Activated CD4-positive, alpha-beta memory T cell treated with anti-CD3 and anti-CD28 coated beads, Interleukin-2, amount 10 ng/mL, durations not matched to agents 7 days and 5 days (primary cell): ENCODE measurements at regions of chr17 and their contacts with region 1.

Region 1: DNA sequence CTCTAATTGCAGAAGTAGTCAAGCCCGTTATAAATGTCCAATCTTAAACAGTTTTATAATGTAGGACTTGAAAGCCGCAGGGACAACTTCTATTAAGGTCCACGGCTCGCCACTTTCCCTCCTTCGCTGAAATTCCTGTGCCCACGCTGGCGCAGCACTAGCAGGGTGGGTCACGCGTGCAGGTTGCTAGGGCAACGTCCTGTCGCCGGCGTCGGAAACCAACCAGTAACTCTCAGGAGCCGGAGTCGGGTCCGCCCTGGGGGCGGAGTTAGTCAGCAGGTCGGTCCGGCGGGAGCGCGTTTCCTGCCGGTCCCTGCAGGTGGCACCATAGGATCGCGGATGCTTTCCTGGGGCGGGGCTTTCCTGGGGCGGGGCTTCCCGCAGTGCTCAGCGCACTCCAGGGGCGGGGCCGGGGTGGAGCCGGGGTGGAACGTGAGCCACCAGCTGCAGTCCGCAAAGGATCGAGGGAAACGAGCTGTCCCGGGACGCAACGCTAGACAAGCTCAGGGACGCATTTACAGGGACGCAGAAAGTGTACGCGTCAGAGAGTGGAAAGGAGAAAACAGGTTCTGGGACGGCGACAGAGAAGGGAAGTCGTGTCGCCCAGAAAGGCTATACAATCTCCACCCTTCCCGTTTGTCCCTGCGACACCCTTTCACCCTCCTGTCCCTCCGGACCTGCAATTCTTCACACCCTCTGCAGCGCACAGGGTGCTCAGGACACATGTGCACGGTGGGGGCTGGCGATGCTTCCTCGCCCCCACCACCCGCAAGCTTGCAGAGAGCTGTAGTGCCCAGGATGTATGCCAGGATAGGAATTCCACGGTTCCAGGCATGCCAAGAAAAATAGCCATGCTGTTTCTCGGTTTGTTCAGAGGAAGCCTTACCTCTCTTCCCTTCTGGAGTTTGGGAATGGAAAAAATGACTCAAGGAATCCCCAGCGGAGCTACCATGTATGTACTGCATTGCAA is 12.4 kb downstream of the COPZ2 start:
- DNase-seq: peak; percentile 98
- H3K4me3 Mint-ChIP-seq: peak overlapping the region; percentile 86
- H3K27ac Mint-ChIP-seq: peak overlapping the region; percentile 91
- H3K4me1 Mint-ChIP-seq: peaks cover 38% of the 10 kb centered on the region
- H3K27me3 Mint-ChIP-seq: peaks cover 20% of the 10 kb centered on the region

Region 2: GRCh38 chr17:47949136-47949759 is 76.0 kb before region 1 on chr17:
- CTCF ChIA-PET with region 1: interaction called, 10 read pairs
- POLR2A ChIA-PET with region 1: no interaction called
- DNase-seq: peak; percentile 84
- H3K4me3 Mint-ChIP-seq: peak overlapping the region; percentile 43
- H3K27ac Mint-ChIP-seq: peak overlapping the region; percentile 68
- H3K4me1 Mint-ChIP-seq: peaks cover 41% of the 10 kb centered on the region
- H3K27me3 Mint-ChIP-seq: no peaks in the 10 kb centered on the region

Region 3: DNA sequence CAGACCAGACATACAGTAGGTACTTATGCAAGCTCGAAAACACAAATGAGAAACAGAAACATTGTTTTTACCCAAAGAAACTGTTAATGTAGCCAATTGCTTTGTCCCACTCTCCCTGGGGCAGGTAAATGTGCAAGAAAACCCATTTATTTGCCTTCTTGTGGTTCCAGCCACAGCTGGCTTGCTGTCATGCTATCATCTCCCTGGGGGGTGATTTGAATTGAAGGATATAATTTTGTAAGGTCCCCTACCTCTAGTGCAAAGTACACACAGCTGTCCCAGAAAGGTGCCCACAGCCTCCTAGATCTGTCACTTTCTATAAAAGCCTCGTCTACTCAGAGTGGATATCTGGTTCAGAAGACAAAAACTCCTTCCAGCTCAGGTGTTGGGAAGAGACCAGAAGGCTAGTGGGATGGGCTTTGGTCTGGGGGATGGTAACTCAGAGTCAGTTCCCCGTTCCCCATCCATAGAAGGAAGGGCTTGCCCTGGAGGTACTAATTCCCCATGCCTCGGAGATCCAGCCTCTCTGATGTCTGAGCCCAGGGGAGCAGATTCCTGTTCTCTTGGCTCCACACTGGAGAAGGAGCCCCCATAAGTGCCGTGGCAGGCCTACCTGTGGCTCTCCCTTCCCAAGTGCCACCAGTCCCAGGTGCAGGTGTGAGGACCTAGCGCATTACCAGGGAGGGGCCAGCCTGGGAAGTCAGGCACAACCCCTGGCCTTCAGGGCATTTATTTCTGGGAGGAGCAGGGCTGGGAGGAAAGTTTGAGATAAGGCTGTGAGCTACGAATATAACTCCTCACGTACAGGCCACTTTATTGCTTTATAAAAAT is 65.2 kb before region 1 on chr17:
- CTCF ChIA-PET with region 1: no interaction called
- POLR2A ChIA-PET with region 1: no interaction called
- DNase-seq: no peak
- H3K4me3 Mint-ChIP-seq: no peak overlapping the region
- H3K27ac Mint-ChIP-seq: no peak overlapping the region
- H3K4me1 Mint-ChIP-seq: no peaks in the 10 kb centered on the region
- H3K27me3 Mint-ChIP-seq: peaks cover 2% of the 10 kb centered on the region

Region 4: GRCh38 chr17:48011405-48012150 is 13.6 kb before region 1 on chr17:
- CTCF ChIA-PET with region 1: interaction called, 27 read pairs
- POLR2A ChIA-PET with region 1: no interaction called
- DNase-seq: peak; percentile 68
- H3K4me3 Mint-ChIP-seq: peak overlapping the region; percentile 73
- H3K27ac Mint-ChIP-seq: no peak overlapping the region
- H3K4me1 Mint-ChIP-seq: peaks cover 23% of the 10 kb centered on the region
- H3K27me3 Mint-ChIP-seq: peaks cover 49% of the 10 kb centered on the region

Region 5: DNA sequence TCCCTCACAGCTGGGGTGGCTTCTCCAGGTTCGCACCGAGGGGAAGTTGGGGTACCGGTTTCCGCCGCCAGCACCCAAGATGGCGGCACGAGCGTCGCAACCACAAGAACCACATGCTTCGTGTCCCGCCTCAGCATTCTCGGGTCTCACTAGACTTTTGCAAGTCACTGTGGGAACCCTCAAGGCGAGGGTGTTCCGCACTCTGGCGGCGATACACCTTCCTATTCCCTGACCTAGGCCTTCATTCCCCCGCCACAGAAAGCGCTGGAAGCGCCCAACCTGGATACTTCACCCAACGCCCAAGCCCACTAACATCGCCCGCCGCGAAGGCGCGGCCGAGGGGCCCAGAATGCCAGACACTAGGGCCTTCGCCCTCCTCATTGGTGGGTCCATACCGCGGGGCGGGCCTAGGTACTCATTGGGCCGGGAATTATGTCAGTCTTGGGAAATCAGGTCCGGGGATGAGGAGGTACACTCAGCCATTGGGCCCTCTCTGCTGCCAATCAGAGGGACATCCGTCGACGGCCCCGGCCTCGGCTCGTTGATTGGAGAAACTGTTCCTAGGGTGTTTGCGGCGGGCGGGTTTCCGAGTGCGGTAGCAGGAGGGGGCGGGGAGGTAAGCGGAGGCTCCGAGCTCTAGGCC is 22.6 kb after region 1 on chr17 and contains the start of gene NFE2L1:
- CTCF ChIA-PET with region 1: interaction called, 62 read pairs
- POLR2A ChIA-PET with region 1: interaction called, 45 read pairs
- DNase-seq: peak; percentile 99
- H3K4me3 Mint-ChIP-seq: peak within 1 kb of the TSS; percentile 99
- H3K27ac Mint-ChIP-seq: peak within 1 kb of the TSS; percentile 97
- H3K4me1 Mint-ChIP-seq: peaks cover 64% of the 10 kb centered on the region
- H3K27me3 Mint-ChIP-seq: no peaks in the 10 kb centered on the region
- total RNA-seq, gene NFE2L1: 69.4 to 70.2 TPM

Region 6: DNA sequence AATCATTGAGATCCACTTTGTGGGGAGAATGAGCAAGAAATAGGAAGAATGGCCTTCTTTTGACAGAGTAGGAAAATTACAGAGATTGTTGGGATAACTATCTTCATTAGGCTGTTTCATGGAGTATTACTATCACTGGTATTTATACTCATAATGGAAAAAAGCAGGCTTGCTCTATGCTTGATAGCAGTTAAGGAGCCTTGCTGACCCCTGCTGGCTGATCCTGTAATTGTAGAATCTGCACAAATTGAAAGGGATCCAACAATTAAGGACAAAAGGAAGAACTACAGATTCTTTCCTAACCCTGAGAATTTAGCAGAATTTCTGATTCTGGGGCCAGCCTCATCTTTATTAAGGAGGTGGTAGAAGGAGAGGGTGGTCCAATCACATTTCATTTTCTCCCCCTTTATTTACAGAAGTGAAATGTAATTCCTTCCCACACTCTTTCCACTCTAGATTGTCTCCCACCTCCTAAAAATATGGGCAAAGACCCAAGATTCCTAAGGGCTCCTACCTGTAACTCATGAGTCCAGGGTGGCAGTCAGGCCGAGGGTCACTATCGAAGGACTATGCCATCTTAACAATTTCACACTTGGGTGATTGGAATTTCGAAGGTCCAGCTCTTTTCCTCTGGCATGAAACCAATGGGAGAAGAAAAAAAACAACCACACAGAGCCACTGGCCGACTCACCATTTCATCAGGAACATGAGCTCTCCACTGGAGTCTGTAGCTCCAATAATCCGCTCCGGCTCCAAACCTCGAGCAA is 49.3 kb after region 1 on chr17:
- CTCF ChIA-PET with region 1: interaction called, 94 read pairs
- POLR2A ChIA-PET with region 1: interaction called, 5 read pairs
- DNase-seq: peak; percentile 77
- H3K4me3 Mint-ChIP-seq: no peak overlapping the region
- H3K27ac Mint-ChIP-seq: no peak overlapping the region
- H3K4me1 Mint-ChIP-seq: no peaks in the 10 kb centered on the region
- H3K27me3 Mint-ChIP-seq: no peaks in the 10 kb centered on the region

Region 7: GRCh38 chr17:48101012-48101720 is 75.9 kb after region 1 on chr17 and contains the start of gene CBX1:
- CTCF ChIA-PET with region 1: interaction called, 18 read pairs
- POLR2A ChIA-PET with region 1: interaction called, 3 read pairs
- DNase-seq: peak; percentile 95
- H3K4me3 Mint-ChIP-seq: peak within 1 kb of the TSS; percentile 94
- H3K27ac Mint-ChIP-seq: peak within 1 kb of the TSS; percentile 85
- H3K4me1 Mint-ChIP-seq: peaks cover 57% of the 10 kb centered on the region
- H3K27me3 Mint-ChIP-seq: no peaks in the 10 kb centered on the region
- total RNA-seq, gene CBX1: 48.3 to 50.8 TPM